BJ (cell line): ENCODE measurements at regions of chr7 and their contacts with region 1.

Region 1: GRCh38 chr7:6148724-6149360 is 117.7 kb downstream of the ANKRD61 start:
- DNase-seq: no peak
- H3K4me3 ChIP-seq: no peak overlapping the region
- H3K27me3 ChIP-seq: no peaks in the 10 kb centered on the region
- CTCF ChIP-seq: no peak

Region 2: DNA sequence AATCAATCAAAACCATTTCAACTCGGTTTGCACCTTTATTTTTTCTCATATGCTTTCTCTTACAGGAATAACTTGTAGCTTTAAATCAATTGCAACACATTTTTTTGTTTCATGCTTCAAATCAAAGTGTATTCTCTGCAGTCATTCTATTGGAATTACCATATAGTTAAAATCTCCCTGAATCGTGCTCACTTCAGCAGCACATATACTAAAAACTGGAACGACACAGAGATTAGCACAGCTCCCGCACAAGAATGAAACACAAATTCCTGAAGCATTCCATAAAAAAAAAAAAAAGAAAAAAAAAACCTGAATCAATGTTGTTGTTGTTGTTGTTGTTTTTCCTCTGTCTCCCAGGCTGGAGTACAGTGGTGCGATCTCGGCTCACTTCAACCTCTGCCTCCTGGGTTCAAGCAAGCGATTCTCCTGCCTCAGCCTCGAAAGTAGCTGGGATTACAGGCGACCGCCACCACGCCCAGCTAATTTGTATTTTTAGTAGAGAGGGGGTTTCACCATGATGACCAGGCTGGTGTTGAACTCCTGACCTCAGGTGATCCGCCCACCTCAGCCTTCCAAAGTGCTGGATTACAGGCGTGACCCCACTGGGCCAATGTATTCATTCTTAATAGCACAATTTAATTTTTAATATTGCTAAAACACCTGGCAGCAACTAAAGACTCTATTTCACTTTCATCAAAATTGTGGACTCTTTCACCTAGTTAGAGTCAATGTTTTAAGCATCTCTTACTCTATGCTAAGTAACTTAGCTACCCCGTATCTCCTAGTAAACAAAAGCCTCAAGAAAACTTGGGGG is 91.3 kb before region 1 on chr7:
- CTCF ChIA-PET with region 1: no interaction called
- POLR2A ChIA-PET with region 1: interaction called, 10 read pairs
- DNase-seq: no peak
- H3K4me3 ChIP-seq: peak overlapping the region; percentile 79
- H3K27me3 ChIP-seq: no peaks in the 10 kb centered on the region
- CTCF ChIP-seq: no peak

Region 3: GRCh38 chr7:6188389-6188788 is 39.5 kb after region 1 on chr7:
- CTCF ChIA-PET with region 1: no interaction called
- POLR2A ChIA-PET with region 1: no interaction called
- DNase-seq: no peak
- H3K4me3 ChIP-seq: no peak overlapping the region
- H3K27me3 ChIP-seq: no peaks in the 10 kb centered on the region
- CTCF ChIP-seq: no peak